Heart right ventricle (tissue), 16 donors: ENCODE measurements at regions of chr3 and their contacts with region 1.

Region 1: DNA sequence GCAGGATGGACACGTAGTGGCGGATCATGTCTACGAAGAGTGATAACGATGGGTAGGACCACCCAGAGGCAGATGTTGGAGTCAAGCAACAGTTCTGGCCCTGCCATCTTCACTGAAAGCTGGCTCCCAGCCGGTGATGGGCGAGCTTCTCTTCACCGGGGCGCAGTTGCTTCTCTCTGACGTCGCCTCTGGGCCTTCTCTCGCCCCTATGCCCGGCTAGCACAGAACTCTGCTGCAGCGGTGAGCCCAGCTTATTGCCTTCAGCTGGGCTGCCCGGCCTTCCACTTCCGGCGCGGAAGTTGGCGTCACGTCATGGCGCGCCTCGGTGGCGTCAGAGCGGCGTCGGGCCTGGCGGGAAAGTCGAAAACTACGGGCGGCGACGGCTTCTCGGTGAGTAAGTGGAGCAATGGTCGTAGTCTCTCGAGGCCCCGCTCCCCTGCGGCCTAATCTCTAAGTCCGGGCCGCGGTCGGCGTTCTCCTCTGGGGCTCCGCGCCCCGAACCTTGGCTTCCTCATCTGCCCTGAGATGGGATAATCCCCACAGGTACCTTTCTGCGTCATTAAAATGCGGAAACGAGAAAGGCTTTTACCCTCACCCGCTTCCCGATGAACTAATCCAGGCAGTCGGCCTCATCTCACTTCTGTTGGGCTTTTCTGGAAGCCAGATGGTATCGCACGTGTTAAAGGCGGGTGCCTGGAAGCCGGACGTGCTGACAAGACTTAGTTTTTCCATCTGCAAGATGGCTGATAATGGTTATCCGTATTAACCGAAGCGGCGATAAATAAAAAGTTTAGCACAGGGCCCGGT is at the start of gene FANCD2:
- DNase-seq: peak; percentile 87 to 91
- ATAC-seq: peak; percentile 95 to 99 (median 97)
- H3K4me3 ChIP-seq: peak within 1 kb of the TSS; percentile 68 to 97 (median 88)
- H3K27ac ChIP-seq: peak within 1 kb of the TSS in 9 of 10 donors; percentile 72 to 93 (median 81)
- H3K4me1 ChIP-seq: peaks cover 0 to 33% (median 26%) of the 10 kb centered on the region in 9 donors
- H3K27me3 ChIP-seq: no peaks in the 10 kb centered on the region
- CTCF ChIP-seq: no peak
- total RNA-seq, gene FANCD2: 0.55 to 3.2 (median 1.1) TPM

Region 2: DNA sequence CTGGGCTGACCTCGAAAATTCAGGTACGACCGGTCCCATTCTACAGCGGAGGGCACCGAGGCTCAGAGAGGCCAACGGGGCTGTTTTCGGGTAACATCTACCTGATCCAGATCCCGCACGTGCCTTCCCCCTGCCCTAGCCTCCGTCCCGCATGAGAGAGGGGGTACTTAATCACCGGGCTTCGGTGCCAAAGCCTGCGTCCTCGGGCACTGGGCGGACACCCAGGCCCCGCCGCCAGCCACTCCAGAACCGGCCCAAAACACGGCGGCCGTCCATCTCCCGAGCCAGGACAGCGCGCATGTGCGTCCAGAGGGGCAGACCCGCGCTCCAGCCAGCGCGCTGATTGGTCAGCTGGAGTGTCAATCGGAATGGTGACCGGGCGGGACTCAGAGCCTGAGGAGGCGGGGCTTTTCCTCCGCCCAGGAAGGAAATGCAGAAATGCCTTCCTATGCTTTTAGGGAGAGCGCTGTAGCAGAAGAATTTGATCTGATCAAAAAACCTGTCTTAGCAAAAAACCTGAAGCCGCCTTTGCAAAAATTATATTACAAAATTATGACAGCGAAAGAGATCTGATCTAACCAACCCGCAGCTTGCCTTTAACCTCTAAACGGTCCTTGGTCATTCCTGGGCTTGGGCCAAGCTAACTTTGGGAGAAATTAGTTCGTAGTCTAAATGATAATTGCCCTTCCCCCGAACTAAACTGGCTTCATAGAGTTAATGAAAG is 182.4 kb before region 1 on chr3 and contains the start of gene RPUSD3:
- intact Hi-C with region 1: loop called in 1 of 10 experiments (anchors 10 kb)
- DNase-seq: peak; percentile 99
- ATAC-seq: peak; percentile 98 to 100 (median 100)
- H3K4me3 ChIP-seq: peak within 1 kb of the TSS; percentile 62 to 87 (median 76)
- H3K27ac ChIP-seq: peak within 1 kb of the TSS; percentile 68 to 90 (median 82)
- H3K4me1 ChIP-seq: peaks cover 0 to 18% (median 10%) of the 10 kb centered on the region in 9 donors
- H3K27me3 ChIP-seq: no peaks in the 10 kb centered on the region
- CTCF ChIP-seq: no peak
- total RNA-seq, gene RPUSD3: 26.4 to 42.3 (median 29.4) TPM

Region 3: DNA sequence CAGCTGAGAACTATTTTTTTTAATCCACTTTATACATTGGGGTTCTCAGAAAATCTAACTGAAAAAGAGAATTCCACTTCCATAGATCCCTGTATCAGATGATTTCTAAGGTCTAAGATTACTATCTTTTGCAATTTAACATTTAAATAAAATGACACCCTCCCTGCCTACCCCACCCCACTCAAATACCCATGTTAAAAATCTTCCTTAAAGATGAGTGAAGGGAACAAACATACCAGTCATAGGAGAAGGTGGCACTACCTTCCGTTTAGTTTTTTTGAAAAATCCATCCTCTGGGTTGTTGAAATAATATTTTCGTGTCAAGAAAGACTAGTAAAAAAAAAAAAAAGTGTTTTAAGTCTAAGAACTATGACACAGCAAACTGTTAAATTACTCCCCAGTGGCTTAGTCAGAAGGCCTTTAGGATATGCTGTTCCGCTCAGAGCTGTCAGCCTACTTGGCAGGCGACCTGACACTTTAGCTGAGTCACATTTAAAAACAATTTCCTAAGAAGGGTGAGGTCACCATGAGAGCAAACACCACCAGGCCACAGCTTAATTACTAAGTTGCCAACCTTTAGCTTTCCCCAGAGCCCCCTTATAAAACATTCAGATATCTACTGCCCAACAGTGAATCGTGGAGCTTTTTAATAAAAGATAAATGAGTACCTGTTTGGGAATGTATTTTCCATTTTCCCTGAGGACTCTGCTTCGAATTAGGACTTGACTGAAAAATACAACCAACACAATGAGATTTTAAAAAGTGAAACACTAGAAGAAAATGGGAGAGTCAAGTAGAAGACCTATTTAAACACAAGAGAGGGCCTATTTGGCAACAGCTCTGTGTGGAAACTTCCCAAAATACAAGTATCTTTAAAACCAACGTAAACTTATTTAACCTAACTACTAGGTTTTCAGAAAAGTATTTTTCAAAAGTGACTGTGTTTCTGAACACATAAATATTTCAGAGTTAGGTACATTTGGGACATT is 49.3 kb before region 1 on chr3:
- intact Hi-C with region 1: loop called in 1 of 10 experiments (anchors 5 kb)
- DNase-seq: peak; percentile 52 to 75
- ATAC-seq: peak; percentile 94 to 99 (median 97)
- H3K4me3 ChIP-seq: peak overlapping the region in 9 of 10 donors; percentile 5 to 31 (median 21)
- H3K27ac ChIP-seq: peak overlapping the region; percentile 23 to 87 (median 78)
- H3K4me1 ChIP-seq: peaks cover 0 to 37% (median 17%) of the 10 kb centered on the region in 9 donors
- H3K27me3 ChIP-seq: no peaks in the 10 kb centered on the region
- CTCF ChIP-seq: no peak

Region 4: GRCh38 chr3:9986237-9986725 is 40.0 kb before region 1 on chr3:
- intact Hi-C with region 1: loop called in 3 of 10 experiments (anchors 5 kb)
- DNase-seq: no peak
- ATAC-seq: peak; percentile 10 to 69 (median 60)
- H3K4me3 ChIP-seq: peak overlapping the region; percentile 73 to 96 (median 90)
- H3K27ac ChIP-seq: peak overlapping the region in 9 of 10 donors; percentile 66 to 95 (median 81)
- H3K4me1 ChIP-seq: peaks cover 10 to 42% (median 32%) of the 10 kb centered on the region in 9 donors
- H3K27me3 ChIP-seq: no peaks in the 10 kb centered on the region
- CTCF ChIP-seq: no peak

Region 5: DNA sequence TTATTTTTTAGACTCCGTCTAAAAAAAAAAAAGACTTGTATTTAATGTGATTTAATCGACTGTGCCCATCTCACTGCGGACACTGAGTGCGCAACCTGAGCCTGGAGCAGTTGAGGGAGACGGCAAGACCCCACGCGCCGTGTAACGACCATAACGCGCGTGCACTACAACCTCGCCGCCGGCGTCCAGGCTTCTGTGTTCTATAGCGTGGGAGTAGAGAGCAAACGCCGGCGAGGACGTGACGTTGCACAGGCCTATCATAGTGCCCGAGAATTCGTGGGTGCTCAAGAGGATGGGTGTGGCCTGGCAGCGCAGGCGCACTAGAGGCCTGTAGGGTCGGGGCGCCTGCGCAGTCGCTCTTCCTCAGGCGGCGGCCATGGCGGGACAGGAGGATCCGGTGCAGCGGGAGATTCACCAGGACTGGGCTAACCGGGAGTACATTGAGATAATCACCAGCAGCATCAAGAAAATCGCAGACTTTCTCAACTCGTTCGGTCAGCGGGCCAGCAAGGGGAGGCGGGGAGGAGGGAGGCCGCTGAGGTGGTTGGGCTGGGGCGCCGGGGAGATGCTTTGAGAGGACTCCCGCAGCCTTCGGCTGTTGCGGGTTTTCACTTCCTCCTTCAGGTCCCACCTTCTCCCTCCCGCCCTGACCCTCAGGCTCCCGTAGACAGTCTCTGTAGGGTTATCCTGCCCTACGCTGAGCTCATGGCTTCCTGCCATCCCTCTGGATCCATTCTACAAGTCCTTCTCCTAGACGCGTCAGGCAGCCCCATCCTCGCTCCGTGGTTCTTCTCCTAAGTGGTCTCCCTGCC is 89.2 kb after region 1 on chr3 and contains the start of gene BRK1:
- intact Hi-C with region 1: loop called in 2 of 10 experiments (anchors 10 kb)
- DNase-seq: peak; percentile 94 to 95
- ATAC-seq: peak; percentile 100
- H3K4me3 ChIP-seq: peak within 1 kb of the TSS; percentile 77 to 97 (median 84)
- H3K27ac ChIP-seq: peak within 1 kb of the TSS in 9 of 10 donors; percentile 66 to 90 (median 83)
- H3K4me1 ChIP-seq: peaks cover 3 to 44% (median 31%) of the 10 kb centered on the region in 9 donors
- H3K27me3 ChIP-seq: no peaks in the 10 kb centered on the region
- CTCF ChIP-seq: no peak
- total RNA-seq, gene BRK1: 80.3 to 101 (median 94.8) TPM

Region 6: DNA sequence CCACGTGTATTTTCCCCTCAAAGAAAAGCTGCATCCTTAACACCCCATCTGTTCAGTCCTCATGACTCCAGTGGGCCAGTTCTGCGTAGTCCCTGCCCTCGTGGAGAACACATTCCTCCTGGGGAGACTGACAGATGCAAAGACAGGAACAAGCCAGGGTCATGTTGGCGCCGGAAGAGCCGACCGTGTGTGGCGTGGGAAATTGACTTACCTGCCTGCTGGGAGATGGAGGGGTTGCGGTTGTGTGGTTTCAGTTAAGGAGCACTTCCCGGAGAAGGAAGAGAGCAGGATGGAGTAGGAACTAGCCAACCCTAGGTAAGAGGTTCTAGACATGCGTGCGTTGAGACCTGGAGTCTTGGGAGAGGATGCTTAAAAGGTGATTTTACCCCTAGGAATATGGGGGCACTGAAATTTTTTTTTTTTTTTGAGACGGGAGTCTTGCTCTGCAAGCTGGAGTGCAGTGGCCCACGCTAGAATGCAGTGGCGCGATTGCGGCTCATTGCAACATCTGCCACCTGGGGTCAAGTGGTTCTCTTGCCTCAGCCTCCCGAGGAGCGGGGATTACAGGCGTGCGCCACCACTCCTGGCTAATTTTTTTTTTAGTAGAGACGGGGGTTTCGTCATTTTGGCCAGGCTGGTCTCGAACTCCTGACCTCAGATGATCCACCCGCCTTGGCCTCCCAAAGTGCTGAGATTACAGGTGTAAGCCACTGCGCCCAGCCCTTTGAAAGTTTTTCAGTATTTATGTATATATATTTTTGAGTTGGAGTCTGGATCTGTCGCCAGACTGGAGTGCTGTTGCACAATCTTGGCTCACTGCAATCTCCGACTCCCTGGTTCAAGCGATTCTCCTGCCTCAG is 116.7 kb after region 1 on chr3:
- intact Hi-C with region 1: loop called in 1 of 10 experiments (anchors 5 kb)
- DNase-seq: no peak
- ATAC-seq: no peak
- H3K4me3 ChIP-seq: peak overlapping the region; percentile 51 to 95 (median 78)
- H3K27ac ChIP-seq: peak overlapping the region in 5 of 10 donors; percentile 84 to 97 (median 89)
- H3K4me1 ChIP-seq: peaks cover 3 to 53% (median 34%) of the 10 kb centered on the region in 9 donors
- H3K27me3 ChIP-seq: no peaks in the 10 kb centered on the region
- CTCF ChIP-seq: no peak